MCF 10A (cell line): ENCODE measurements at regions of chr18 and their contacts with region 1.

Region 1: DNA sequence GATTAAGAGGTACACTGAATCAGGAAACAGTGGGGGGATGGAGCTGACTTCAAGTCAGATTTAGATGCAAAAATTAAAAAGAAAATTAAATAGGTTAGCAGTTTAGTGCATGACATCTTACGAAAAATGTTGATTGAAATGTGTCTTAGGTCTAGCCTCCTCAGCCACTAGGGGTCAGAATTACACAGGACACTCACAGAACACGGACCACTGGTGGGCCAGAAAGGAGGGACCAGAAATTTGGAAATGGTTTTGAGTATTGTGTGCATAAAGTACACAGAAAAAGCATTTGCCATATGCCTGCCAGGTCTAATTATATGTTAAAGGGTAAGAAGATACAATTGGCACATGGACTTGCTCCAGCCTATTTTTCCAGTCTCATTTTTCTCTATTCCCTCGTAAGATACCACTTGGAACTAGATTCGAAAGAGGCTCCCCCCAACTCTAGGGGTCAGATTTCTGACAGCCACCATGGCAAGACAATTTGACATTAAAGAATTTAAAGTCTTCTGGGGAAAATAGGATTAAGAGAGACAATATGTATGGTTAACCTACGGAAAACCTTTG is 550.2 kb upstream of the SETBP1 start:
- DNase-seq: peak; percentile 61
- H3K4me3 Mint-ChIP-seq: no peak overlapping the region
- H3K27ac Mint-ChIP-seq: no peak overlapping the region
- H3K4me1 Mint-ChIP-seq: peaks cover 6% of the 10 kb centered on the region
- H3K27me3 Mint-ChIP-seq: no peaks in the 10 kb centered on the region
- CTCF ChIP-seq: peak; percentile 78

Region 2: GRCh38 chr18:43620936-43621335 is 509.5 kb before region 1 on chr18:
- CTCF ChIA-PET with region 1: interaction called, 5 read pairs
- POLR2A ChIA-PET with region 1: no interaction called
- intact Hi-C with region 1: loop called (anchors 5 kb)
- DNase-seq: peak; percentile 54
- H3K4me3 Mint-ChIP-seq: no peak overlapping the region
- H3K27ac Mint-ChIP-seq: no peak overlapping the region
- H3K4me1 Mint-ChIP-seq: no peaks in the 10 kb centered on the region
- H3K27me3 Mint-ChIP-seq: peaks cover 34% of the 10 kb centered on the region
- CTCF ChIP-seq: peak; percentile 47

Region 3: DNA sequence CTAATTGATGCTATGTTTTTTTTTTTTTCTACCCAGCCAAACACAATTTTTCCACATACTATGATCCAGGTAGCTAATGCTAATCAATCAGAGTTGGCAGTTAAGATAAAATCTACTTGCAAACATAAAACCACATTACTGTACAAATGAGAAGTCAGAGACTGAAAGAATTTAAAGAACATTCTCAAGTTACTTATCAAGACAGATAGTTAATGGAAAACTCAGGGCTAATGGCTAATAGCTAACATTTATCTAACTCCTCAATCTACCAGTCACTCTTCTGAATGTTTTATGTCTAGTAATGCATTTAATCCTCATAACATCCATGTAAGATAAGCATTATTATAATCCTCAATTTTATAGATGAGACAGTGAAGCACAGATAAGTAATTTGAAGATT is 12.6 kb after region 1 on chr18:
- CTCF ChIA-PET with region 1: interaction called, 14 read pairs
- POLR2A ChIA-PET with region 1: no interaction called
- intact Hi-C with region 1: no loop called
- DNase-seq: no peak
- H3K4me3 Mint-ChIP-seq: no peak overlapping the region
- H3K27ac Mint-ChIP-seq: no peak overlapping the region
- H3K4me1 Mint-ChIP-seq: no peaks in the 10 kb centered on the region
- H3K27me3 Mint-ChIP-seq: no peaks in the 10 kb centered on the region
- CTCF ChIP-seq: no peak

Region 4: GRCh38 chr18:44178476-44178875 is 48.0 kb after region 1 on chr18:
- CTCF ChIA-PET with region 1: interaction called, 11 read pairs
- POLR2A ChIA-PET with region 1: no interaction called
- intact Hi-C with region 1: no loop called
- DNase-seq: peak; percentile 13
- H3K4me3 Mint-ChIP-seq: no peak overlapping the region
- H3K27ac Mint-ChIP-seq: no peak overlapping the region
- H3K4me1 Mint-ChIP-seq: no peaks in the 10 kb centered on the region
- H3K27me3 Mint-ChIP-seq: no peaks in the 10 kb centered on the region
- CTCF ChIP-seq: no peak

Region 5: GRCh38 chr18:44280479-44280878 is 150.0 kb after region 1 on chr18:
- CTCF ChIA-PET with region 1: no interaction called
- POLR2A ChIA-PET with region 1: no interaction called
- intact Hi-C with region 1: no loop called
- DNase-seq: no peak
- H3K4me3 Mint-ChIP-seq: no peak overlapping the region
- H3K27ac Mint-ChIP-seq: no peak overlapping the region
- H3K4me1 Mint-ChIP-seq: no peaks in the 10 kb centered on the region
- H3K27me3 Mint-ChIP-seq: no peaks in the 10 kb centered on the region
- CTCF ChIP-seq: no peak

Region 6: DNA sequence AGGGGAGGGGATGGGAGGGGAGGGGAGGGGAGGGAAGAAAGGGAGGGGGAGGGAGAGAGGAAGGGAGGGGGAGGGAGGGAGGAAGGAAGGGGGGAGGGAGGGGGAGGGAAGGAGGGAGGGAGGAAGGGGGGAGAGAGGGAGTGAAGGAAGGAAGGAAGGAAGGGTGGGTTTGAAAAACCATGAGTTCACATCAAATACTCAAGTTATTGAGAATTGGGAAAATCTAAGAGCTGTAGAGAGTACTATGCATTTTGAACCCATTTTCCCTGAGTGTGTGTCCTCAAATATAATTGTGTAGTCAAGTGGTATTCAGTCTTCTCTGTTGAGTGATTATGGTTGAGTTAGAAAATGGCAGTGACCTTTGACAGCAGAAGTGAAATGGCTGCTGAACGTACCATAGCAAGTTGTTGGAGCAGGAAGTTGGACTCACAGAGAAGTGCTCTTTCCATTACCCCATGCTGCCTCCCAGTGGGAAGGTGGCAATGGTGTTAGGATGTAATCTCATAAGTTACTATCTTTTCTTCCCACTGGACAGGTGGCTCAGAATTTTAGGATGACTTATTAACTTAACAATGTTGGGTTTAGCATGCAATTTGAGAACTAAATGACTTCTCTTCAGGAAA is 764.8 kb after region 1 on chr18:
- CTCF ChIA-PET with region 1: interaction called, 3 read pairs
- POLR2A ChIA-PET with region 1: no interaction called
- intact Hi-C with region 1: loop called (anchors 1 kb)
- DNase-seq: peak; percentile 76
- H3K4me3 Mint-ChIP-seq: no peak overlapping the region
- H3K27ac Mint-ChIP-seq: no peak overlapping the region
- H3K4me1 Mint-ChIP-seq: peaks cover 8% of the 10 kb centered on the region
- H3K27me3 Mint-ChIP-seq: no peaks in the 10 kb centered on the region
- CTCF ChIP-seq: peak; percentile 45